Activated T-helper 1 cell treated with anti-CD3 and anti-CD28 coated beads, Interleukin-12 subunit alpha, Interleukin-12 subunit beta, Interleukin-2, Interleukin-4 antibody, amounts not matched to agents 30 ng/mL and 10 ng/mL and 1 ng/mL, durations not matched to agents 14 hours and 24 hours and 36 hours (primary cell): ENCODE measurements at regions of chr3 and their contacts with region 1.

Region 1: GRCh38 chr3:168095611-168096209 is at the start of gene GOLIM4:
- DNase-seq: peak; percentile 42
- H3K4me3 Mint-ChIP-seq: peak within 1 kb of the TSS; percentile 90
- H3K27ac Mint-ChIP-seq: peak within 1 kb of the TSS; percentile 93
- H3K4me1 Mint-ChIP-seq: peaks cover 27% of the 10 kb centered on the region
- H3K27me3 Mint-ChIP-seq: peaks cover 35% of the 10 kb centered on the region
- total RNA-seq, gene GOLIM4: 8.4 and 8.8 TPM in 2 replicates

Region 2: DNA sequence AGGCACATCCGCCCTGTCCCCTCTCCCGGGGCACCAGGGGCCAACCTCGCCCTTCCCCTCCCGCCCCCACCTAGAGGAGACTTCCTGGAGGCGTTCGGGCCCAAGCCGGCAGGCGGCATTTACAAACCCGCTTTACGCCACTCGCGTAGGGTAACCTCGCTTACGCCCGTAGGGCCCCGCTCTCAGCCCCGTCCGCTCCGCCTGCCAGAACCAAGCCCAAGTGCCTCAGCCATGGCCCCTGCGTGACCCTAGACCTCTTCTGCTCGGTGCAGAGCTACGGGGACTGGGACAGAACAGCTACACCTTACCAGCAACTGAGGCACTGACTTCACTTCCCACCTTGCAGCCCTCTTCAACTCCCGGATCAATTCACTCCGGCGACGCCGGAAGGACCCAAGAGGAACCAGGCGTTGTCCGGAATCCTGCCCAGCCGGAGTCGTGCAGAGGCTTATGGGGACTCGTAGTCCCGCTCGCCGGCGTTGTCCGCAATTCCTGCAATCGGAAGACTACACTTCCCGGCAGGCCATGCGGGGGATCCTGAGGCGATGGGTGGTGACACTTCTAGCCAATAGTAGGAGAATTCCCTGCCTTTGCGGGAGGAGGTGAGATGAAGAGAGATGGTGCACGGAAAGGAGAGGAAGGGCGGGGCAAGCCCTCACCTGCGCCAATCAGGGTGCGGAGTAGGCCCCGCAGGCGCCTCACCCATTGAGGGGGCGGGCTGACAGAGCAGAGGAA is 361.0 kb before region 1 on chr3 and contains the start of gene PDCD10:
- intact Hi-C with region 1: loop called (anchors 1 kb)
- DNase-seq: peak; percentile 97
- H3K4me3 Mint-ChIP-seq: no peak within 1 kb of the TSS
- H3K27ac Mint-ChIP-seq: no peak within 1 kb of the TSS
- H3K4me1 Mint-ChIP-seq: peaks cover 5% of the 10 kb centered on the region
- H3K27me3 Mint-ChIP-seq: no peaks in the 10 kb centered on the region
- total RNA-seq, gene PDCD10: 66.2 and 74.5 TPM in 2 replicates

Region 3: GRCh38 chr3:168047190-168047795 is 48.4 kb before region 1 on chr3:
- intact Hi-C with region 1: loop called (anchors 1 kb)
- DNase-seq: no peak
- H3K4me3 Mint-ChIP-seq: no peak overlapping the region
- H3K27ac Mint-ChIP-seq: no peak overlapping the region
- H3K4me1 Mint-ChIP-seq: no peaks in the 10 kb centered on the region
- H3K27me3 Mint-ChIP-seq: no peaks in the 10 kb centered on the region

Region 4: GRCh38 chr3:168165390-168166269 is 69.9 kb after region 1 on chr3:
- intact Hi-C with region 1: loop called (anchors 2 kb)
- DNase-seq: peak; percentile 1
- H3K4me3 Mint-ChIP-seq: no peak overlapping the region
- H3K27ac Mint-ChIP-seq: no peak overlapping the region
- H3K4me1 Mint-ChIP-seq: no peaks in the 10 kb centered on the region
- H3K27me3 Mint-ChIP-seq: no peaks in the 10 kb centered on the region

Region 5: DNA sequence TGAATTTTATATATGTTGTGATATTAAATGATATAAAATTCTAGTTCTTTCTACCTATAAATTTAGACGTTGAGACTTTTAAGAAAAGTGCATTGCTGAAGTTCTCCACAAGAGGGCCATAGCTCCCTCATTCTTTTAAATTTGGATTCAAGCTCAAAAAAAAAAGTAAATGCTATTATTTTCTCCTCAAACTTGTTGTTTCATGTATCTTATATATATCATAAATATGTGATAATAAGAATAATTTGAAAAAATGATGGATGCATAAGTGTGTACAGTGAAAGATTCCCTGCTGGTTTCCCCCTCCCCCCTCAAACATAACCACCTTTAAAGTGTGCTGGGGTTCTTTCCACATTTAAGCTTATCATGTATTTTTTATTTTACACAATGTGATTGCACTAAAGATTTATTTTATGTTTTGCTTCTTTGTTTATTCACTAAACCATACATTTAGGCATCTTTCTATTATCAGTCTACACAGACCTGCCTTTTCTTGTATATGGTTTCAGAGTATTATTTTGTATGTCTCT is 769.4 kb after region 1 on chr3:
- intact Hi-C with region 1: no loop called
- DNase-seq: no peak
- H3K4me3 Mint-ChIP-seq: no peak overlapping the region
- H3K27ac Mint-ChIP-seq: no peak overlapping the region
- H3K4me1 Mint-ChIP-seq: no peaks in the 10 kb centered on the region
- H3K27me3 Mint-ChIP-seq: no peaks in the 10 kb centered on the region